HEK293T (cell line): ENCODE measurements at regions of chr4 and their contacts with region 1.

Region 1: GRCh38 chr4:107037199-107037584 is 1.1 kb upstream of the DKK2 start:
- DNase-seq: peak; percentile 67

Region 2: DNA sequence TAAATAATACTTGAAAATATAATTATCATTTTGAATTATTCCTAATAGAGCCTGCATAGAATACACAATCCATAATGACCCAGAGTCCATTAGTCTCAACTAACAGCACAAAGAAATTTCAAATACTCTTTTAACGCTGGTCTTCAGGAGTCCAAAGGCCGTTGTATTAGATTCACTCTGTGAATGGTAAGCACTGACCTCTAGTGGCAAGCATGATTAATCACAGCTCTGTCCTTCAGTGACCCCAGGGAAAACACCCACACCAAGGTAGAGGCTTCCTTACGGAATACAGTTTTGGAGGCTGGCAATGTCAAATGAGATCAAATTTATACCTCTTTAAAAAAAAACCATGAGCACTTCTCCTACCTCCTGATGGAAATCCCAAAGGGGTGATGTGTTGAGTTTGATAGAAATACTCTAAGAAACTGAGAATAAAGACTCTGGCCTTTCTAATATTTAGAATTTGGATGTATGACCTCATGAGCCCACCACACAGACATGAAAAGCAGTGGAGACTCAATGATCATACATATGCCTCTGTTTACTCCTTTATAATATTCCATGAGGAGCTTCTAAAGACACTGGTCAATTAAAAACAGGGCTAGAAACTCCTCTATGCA is 146.1 kb after region 1 on chr4:
- CTCF ChIA-PET with region 1: interaction called, 16 read pairs
- POLR2A ChIA-PET with region 1: no interaction called
- DNase-seq: peak; percentile 66